ENCODE measurements at regions of chr22 and their contacts with region 1.

Region 1: GRCh38 chr22:31148953-31149627 is 8.8 kb upstream of the PLA2G3 start:
- DNase-seq: peak; percentile 76
- H3K4me3 ChIP-seq: no peak overlapping the region
- H3K27ac ChIP-seq: no peak overlapping the region
- H3K4me1 ChIP-seq: no peaks in the 10 kb centered on the region
- H3K27me3 ChIP-seq: no peaks in the 10 kb centered on the region
- CTCF ChIP-seq: peak; percentile 86

Region 2: GRCh38 chr22:30947816-30948454 is 201.2 kb before region 1 on chr22:
- intact Hi-C with region 1: loop called (anchors 2 kb)
- DNase-seq: no peak
- H3K4me3 ChIP-seq: no peak overlapping the region
- H3K27ac ChIP-seq: no peak overlapping the region
- H3K4me1 ChIP-seq: no peaks in the 10 kb centered on the region
- H3K27me3 ChIP-seq: no peaks in the 10 kb centered on the region
- CTCF ChIP-seq: peak; percentile 36

Region 3: DNA sequence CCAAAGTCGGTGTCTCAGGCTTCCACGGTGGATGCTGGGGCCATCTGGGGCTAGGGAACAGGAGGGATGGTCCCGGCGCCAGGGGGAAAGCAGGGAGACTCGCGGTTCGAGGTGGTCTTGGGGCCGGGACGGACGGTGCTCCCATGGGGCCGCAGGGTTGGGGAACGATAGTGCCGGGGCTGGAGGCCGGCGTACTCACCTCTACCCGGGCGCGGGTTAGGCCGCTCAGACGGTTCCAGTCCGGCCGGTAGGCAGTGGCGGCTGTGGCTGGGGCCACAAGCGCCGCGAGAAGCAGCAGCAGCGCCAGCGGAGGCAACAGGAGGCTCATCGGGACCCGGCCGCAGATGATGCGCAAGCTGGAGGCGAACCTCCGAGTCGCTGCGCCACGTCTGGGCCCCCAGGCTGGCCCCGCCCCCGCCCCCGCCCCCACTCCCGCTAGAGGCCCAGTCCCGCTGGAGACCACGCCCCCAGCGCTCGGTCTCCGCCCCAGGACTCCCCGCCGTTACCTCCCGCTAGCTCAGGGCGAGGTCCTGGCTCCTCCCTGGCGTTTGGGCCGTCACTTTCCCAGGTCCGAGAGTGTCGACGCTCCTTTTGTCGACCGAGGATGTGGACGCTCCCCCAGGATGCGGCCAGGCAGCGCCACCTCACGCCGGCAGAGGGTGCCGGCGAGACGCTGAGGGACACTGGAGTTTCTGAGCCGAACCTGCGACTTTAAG is 41.8 kb before region 1 on chr22 and contains the start of gene SELENOM:
- intact Hi-C with region 1: loop called (anchors 5 kb)
- DNase-seq: peak; percentile 97
- H3K4me3 ChIP-seq: peak within 1 kb of the TSS; percentile 60
- H3K27ac ChIP-seq: peak within 1 kb of the TSS; percentile 85
- H3K4me1 ChIP-seq: no peaks in the 10 kb centered on the region
- H3K27me3 ChIP-seq: no peaks in the 10 kb centered on the region
- CTCF ChIP-seq: peak; percentile 83
- total RNA-seq, gene SELENOM: 27.1 to 61.7 TPM